ENCODE measurements at regions of chr3 and their contacts with region 1.

Region 1: GRCh38 chr3:181103605-181104004 is 114.1 kb upstream of the DNAJC19 start:
- DNase-seq: peak; percentile 67
- H3K4me3 ChIP-seq: no peak overlapping the region
- H3K27ac ChIP-seq: no peak overlapping the region
- H3K4me1 ChIP-seq: no peaks in the 10 kb centered on the region
- CTCF ChIP-seq: peak; percentile 78

Region 2: DNA sequence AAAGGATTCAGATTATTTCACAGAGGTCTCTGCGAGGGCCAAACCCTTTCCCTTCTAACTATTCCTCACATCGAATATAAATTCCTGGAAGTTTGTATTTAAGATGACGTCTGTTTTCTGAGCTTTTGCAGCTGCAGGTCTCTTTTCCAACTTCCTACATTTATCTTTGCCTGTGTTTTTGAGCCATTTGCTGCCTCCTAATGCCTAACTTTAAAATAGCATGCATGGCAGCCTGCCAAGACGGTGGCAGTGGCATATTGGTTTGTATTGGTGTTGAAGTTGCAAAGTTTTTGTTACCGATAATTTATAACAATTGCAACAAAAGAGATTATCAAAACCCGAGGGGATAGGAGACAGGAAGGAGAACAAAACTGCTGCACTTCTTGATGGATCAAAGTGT is 73.0 kb after region 1 on chr3:
- CTCF ChIA-PET with region 1: no interaction called
- POLR2A ChIA-PET with region 1: no interaction called
- intact Hi-C with region 1: loop called (anchors 2 kb)
- DNase-seq: peak; percentile 14
- H3K4me3 ChIP-seq: no peak overlapping the region
- H3K27ac ChIP-seq: no peak overlapping the region
- H3K4me1 ChIP-seq: no peaks in the 10 kb centered on the region
- CTCF ChIP-seq: peak; percentile 62

Region 3: GRCh38 chr3:181278468-181279238 is 175.0 kb after region 1 on chr3:
- CTCF ChIA-PET with region 1: no interaction called
- POLR2A ChIA-PET with region 1: no interaction called
- intact Hi-C with region 1: loop called (anchors 5 kb)
- DNase-seq: peak; percentile 25
- H3K4me3 ChIP-seq: no peak overlapping the region
- H3K27ac ChIP-seq: no peak overlapping the region
- H3K4me1 ChIP-seq: no peaks in the 10 kb centered on the region
- CTCF ChIP-seq: peak; percentile 82